ENCODE measurements at regions of chr22 and their contacts with region 1.

Region 1: DNA sequence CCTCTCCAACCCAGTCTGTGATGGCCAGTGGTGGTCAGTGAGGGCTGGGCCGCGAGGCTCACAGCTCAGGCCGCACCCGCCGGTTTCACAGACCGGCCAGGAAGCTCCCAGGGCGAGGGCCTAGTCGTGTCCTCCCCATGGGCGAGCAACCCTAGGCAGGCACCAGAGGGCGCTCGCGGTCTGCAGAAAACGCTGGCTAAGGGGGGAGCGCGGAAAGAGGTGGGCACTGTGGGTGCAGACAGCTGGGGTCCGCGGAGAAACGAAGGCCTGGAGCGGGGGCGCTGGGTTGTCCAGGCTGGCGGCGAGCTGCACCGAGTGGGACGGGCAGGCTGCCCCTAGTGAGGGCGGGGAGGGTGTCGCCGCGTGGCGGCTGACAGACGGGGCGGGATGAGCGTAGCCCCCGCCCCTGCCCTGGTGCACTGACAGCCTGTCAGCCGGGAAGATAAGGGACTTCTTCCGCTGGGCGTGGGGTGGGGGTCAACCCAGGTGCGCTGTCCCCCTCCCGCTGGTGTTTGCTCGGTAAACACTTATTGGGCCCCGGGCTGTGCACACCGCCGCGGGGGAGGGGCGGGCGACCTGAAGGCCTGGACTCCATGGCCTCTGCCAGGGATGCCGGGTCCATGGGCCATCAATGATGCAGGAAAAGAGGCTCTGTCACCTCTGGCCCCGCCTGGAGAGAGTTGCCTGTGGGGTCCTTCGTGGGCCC is 7.5 kb downstream of the GP1BB start:
- DNase-seq: peak; percentile 78 to 95 (median 85)
- ATAC-seq: peak; percentile 91
- H3K4me3 ChIP-seq: peak overlapping the region in 1 of 2 experiments; percentile 66
- H3K4me3 Mint-ChIP-seq: peak overlapping the region; percentile 82
- H3K27ac ChIP-seq: no peak overlapping the region
- H3K27ac Mint-ChIP-seq: no peak overlapping the region
- H3K4me1 ChIP-seq: peaks cover 10% of the 10 kb centered on the region
- H3K4me1 Mint-ChIP-seq: peaks cover 2% of the 10 kb centered on the region
- H3K27me3 ChIP-seq: peaks cover 0 to 2% of the 10 kb centered on the region in 2 experiments
- H3K27me3 Mint-ChIP-seq: no peaks in the 10 kb centered on the region
- CTCF ChIP-seq: peak; percentile 82

Region 2: DNA sequence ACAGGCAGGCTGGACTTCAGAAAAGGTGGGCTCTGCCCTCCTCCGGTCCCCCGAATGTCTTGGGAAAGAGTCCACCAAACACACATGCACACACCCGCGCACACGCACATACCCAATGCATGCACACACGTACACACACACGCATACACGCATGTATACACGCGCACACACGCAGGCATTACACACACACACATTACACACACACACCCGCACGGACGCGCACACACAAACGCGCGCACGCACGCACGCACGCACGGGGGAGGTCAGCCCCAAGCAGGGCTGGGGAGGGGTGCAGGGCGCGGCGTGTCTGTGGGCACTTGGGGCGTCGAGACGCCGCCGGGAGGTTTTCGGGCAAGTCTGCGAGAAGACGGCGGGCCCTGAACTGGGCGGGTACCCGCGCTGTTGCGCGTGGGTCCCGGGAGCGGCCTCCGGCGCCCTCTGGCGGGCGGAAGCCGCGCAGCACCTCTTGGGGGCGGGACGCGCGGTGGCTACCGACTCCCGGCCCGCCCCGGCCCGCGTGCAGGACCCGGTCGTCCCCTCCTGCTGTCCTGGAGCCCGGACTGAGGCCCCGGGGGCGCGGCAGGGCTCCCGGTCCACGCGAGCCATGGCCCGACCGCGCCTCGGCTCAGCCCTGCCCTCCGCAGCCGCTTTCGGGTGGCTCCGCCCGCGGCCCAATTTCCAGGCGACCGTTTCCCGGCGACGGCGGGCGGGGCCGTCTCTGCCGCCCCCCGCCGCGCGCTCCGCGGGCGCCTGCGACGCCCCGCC is 12.9 kb before region 1 on chr22:
- CTCF ChIA-PET with region 1: interaction called, 27 read pairs
- POLR2A ChIA-PET with region 1: no interaction called
- intact Hi-C with region 1: no loop called
- DNase-seq: peak; percentile 71 to 90 (median 78)
- ATAC-seq: peak; percentile 95
- H3K4me3 ChIP-seq: peak overlapping the region; percentile 29 to 46
- H3K4me3 Mint-ChIP-seq: peak overlapping the region; percentile 65
- H3K27ac ChIP-seq: no peak overlapping the region
- H3K27ac Mint-ChIP-seq: no peak overlapping the region
- H3K4me1 ChIP-seq: peaks cover 29% of the 10 kb centered on the region
- H3K4me1 Mint-ChIP-seq: peaks cover 12% of the 10 kb centered on the region
- H3K27me3 ChIP-seq: peaks cover 17 to 20% of the 10 kb centered on the region in 2 experiments
- H3K27me3 Mint-ChIP-seq: peaks cover 36% of the 10 kb centered on the region
- CTCF ChIP-seq: peak; percentile 97

Region 3: DNA sequence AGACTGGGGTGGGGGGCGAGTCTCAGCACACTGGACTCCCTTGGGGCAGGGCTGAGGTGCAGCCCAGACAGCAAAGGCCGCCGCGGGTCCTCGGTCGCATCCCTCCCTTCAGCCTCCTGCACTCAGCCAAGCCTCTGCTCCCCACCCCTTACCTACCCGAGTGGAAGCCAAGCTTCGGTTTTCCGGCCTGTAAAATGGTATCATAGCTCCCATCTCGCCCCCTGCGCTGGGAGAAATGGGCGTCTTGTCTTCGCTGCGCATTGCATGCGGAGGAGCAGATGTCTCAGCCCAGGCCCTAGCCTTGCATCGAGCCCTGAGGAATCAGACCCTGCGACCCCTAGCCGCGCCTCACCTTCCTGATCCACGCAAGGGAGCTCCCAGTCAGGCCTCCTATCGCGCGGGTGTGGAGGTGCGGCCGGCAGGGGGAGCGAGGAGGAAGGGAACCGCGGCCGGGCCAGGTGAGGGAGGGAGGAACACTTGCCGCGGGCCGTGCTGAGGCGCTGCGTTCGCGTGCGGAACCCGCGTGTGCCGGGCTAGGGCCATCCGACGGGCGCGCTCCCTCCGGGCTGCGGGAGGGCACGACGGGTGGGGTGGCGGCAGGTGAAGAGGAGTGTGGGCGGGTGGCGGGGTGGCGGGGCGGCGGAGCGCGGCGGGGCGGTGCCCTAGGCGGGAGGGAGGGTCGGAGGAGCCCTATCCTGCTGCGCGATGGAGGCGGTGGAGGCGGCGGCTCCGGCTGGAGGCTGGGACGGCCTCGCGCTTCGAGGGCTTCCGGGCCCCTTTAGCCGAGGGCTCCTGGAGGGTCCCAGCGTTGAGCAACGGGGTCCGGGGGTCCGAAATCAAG is 25.7 kb after region 1 on chr22:
- CTCF ChIA-PET with region 1: interaction called, 37 read pairs
- POLR2A ChIA-PET with region 1: no interaction called
- intact Hi-C with region 1: loop called (anchors 1 to 2 kb)
- DNase-seq: peak; percentile 37 to 82 (median 67)
- ATAC-seq: peak; percentile 72
- H3K4me3 ChIP-seq: peak overlapping the region; percentile 15 to 17
- H3K4me3 Mint-ChIP-seq: peak overlapping the region; percentile 74
- H3K27ac ChIP-seq: no peak overlapping the region
- H3K27ac Mint-ChIP-seq: no peak overlapping the region
- H3K4me1 ChIP-seq: peaks cover 26% of the 10 kb centered on the region
- H3K4me1 Mint-ChIP-seq: peaks cover 31% of the 10 kb centered on the region
- H3K27me3 ChIP-seq: peaks cover 24 to 38% of the 10 kb centered on the region in 2 experiments
- H3K27me3 Mint-ChIP-seq: peaks cover 49% of the 10 kb centered on the region
- CTCF ChIP-seq: peak; percentile 37

Region 4: GRCh38 chr22:19854778-19855503 is 124.1 kb after region 1 on chr22 and contains the starts of genes GNB1L and RTL10:
- CTCF ChIA-PET with region 1: interaction called, 5 read pairs
- POLR2A ChIA-PET with region 1: no interaction called
- intact Hi-C with region 1: loop called in 1 of 2 experiments (anchors 1 kb)
- DNase-seq: peak; percentile 87 to 99 (median 96)
- ATAC-seq: peak; percentile 91
- H3K4me3 ChIP-seq: peak within 1 kb of the TSS; percentile 97 to 99
- H3K4me3 Mint-ChIP-seq: peak within 1 kb of the TSS; percentile 93
- H3K27ac ChIP-seq: peak within 1 kb of the TSS; percentile 83 to 85
- H3K27ac Mint-ChIP-seq: peak within 1 kb of the TSS; percentile 98
- H3K4me1 ChIP-seq: peaks cover 37% of the 10 kb centered on the region
- H3K4me1 Mint-ChIP-seq: peaks cover 63% of the 10 kb centered on the region
- H3K27me3 ChIP-seq: no peaks in the 10 kb centered on the region
- H3K27me3 Mint-ChIP-seq: no peaks in the 10 kb centered on the region
- CTCF ChIP-seq: no peak
- total RNA-seq, gene GNB1L: 5.8 to 6.9 TPM
- total RNA-seq, gene RTL10: 21.5 to 22.9 TPM

Region 5: GRCh38 chr22:19896665-19897355 is 166.0 kb after region 1 on chr22:
- CTCF ChIA-PET with region 1: interaction called, 94 read pairs
- POLR2A ChIA-PET with region 1: no interaction called
- intact Hi-C with region 1: no loop called
- DNase-seq: peak in 7 of 9 experiments; percentile 24 to 69 (median 43)
- ATAC-seq: peak; percentile 17
- H3K4me3 ChIP-seq: no peak overlapping the region
- H3K4me3 Mint-ChIP-seq: no peak overlapping the region
- H3K27ac ChIP-seq: no peak overlapping the region
- H3K27ac Mint-ChIP-seq: peak overlapping the region; percentile 99
- H3K4me1 ChIP-seq: peaks cover 57% of the 10 kb centered on the region
- H3K4me1 Mint-ChIP-seq: peaks cover 55% of the 10 kb centered on the region
- H3K27me3 ChIP-seq: no peaks in the 10 kb centered on the region
- H3K27me3 Mint-ChIP-seq: no peaks in the 10 kb centered on the region
- CTCF ChIP-seq: no peak

Region 6: GRCh38 chr22:19923914-19924513 is 193.2 kb after region 1 on chr22:
- CTCF ChIA-PET with region 1: interaction called, 224 read pairs
- POLR2A ChIA-PET with region 1: no interaction called
- intact Hi-C with region 1: no loop called
- DNase-seq: no peak
- ATAC-seq: no peak
- H3K4me3 ChIP-seq: no peak overlapping the region
- H3K4me3 Mint-ChIP-seq: no peak overlapping the region
- H3K27ac ChIP-seq: no peak overlapping the region
- H3K27ac Mint-ChIP-seq: no peak overlapping the region
- H3K4me1 ChIP-seq: no peaks in the 10 kb centered on the region
- H3K4me1 Mint-ChIP-seq: no peaks in the 10 kb centered on the region
- H3K27me3 ChIP-seq: no peaks in the 10 kb centered on the region
- H3K27me3 Mint-ChIP-seq: no peaks in the 10 kb centered on the region
- CTCF ChIP-seq: no peak

Region 7: DNA sequence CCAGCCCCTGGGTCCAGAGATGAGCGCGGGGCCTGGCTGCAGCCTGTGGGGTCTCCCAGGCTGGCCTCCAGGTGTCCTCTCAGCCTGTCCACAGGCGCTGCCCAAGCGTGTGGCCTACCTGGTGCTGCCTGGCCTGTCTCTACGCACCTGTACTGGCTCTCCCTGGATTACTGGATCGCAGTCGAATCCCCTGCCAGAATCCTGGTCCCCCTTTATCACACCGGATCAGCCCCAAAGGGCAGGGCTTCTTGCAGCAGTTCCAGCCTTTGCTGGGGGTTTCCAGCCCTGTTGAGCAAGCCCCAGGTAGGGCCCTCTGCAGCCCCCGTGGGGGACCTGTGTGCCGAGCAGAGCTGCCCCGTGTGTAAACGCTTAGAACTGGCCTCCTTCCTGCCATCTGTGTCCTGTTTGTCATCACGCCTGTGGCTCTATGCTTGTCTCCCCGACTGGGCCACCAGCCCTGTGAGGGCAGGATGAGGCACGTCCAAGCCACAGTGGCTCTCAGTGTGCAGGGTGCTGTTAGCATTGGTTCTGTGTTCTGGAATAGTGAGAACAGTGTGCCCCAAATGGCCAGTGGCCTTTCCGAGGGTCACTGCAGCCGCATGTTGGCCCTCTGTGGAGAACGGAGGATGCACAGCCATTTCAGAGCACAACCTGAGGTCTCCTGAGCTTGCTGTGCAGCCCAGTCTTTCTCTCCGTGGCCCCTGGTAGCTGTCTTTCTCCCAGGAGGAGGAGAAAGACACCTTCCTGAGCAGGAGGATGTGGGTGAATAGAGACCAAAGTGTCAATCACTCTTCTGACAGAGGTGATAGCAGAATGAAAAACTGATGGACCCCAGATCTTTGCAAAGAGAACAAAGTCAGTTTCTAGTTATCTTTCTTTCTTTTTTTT is 224.7 kb after region 1 on chr22:
- CTCF ChIA-PET with region 1: interaction called, 29 read pairs
- POLR2A ChIA-PET with region 1: no interaction called
- intact Hi-C with region 1: no loop called
- DNase-seq: peak in 3 of 9 experiments; percentile 32 to 64 (median 54)
- ATAC-seq: peak; percentile 58
- H3K4me3 ChIP-seq: no peak overlapping the region
- H3K4me3 Mint-ChIP-seq: no peak overlapping the region
- H3K27ac ChIP-seq: peak overlapping the region in 1 of 2 experiments; percentile 67
- H3K27ac Mint-ChIP-seq: peak overlapping the region; percentile 64
- H3K4me1 ChIP-seq: peaks cover 6% of the 10 kb centered on the region
- H3K4me1 Mint-ChIP-seq: peaks cover 15% of the 10 kb centered on the region
- H3K27me3 ChIP-seq: no peaks in the 10 kb centered on the region
- H3K27me3 Mint-ChIP-seq: no peaks in the 10 kb centered on the region
- CTCF ChIP-seq: no peak